ENCODE measurements at regions of chr20 and their contacts with region 1.

Region 1: DNA sequence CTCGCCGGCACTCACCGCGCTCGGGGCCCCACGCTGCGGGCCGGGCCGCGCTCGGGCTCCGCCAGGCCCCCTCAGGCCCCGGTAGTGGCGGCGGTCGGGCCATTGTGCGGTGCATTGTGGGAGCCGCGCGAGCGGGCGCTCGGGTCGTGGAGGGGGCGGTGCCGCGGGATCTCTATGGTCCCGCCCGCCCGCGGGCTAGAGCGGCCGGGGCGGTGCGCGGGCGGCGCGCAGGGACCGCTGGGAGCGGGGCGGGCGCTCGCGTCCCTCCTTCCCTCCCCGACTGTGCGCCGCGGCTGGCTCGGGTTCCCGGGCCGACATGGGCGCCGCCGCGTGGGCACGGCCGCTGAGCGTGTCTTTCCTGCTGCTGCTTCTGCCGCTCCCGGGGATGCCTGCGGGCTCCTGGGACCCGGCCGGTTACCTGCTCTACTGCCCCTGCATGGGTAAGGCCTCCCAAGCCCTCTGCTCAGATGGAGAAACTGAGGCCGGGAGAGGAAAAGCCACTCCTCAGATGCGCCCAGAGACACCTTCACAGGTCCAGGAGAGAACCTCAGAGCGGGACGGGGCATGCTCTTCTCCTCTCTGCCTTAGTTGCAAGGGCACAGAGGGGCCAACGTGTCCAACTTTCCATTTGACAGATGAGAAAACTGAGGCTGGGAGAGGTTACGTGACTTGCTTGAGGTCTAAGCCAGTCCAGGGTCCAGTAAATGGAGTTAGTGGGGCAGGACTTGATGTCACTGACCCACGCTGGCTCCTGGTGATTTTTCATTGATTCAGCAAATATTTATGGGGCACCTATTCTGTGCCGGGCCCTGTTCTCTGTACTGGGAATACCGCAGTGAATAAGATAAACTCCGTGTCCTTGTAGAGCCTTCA is at the starts of genes PLAGL2 and POFUT1:
- DNase-seq: peak; percentile 76 to 85 (median 79)
- H3K4me3 ChIP-seq: peak within 1 kb of the TSS; percentile 90 to 96 (median 93)
- H3K4me3 Mint-ChIP-seq: peak within 1 kb of the TSS; percentile 97 to 98
- H3K27ac ChIP-seq: peak within 1 kb of the TSS; percentile 79 to 88
- H3K27ac Mint-ChIP-seq: peak within 1 kb of the TSS; percentile 96 to 99 (median 97)
- H3K4me1 ChIP-seq: peaks cover 49 to 59% of the 10 kb centered on the region in 2 donors
- H3K4me1 Mint-ChIP-seq: peaks cover 67% of the 10 kb centered on the region
- H3K27me3 ChIP-seq: no peaks in the 10 kb centered on the region
- H3K27me3 Mint-ChIP-seq: peaks cover 0 to 4% (median 1%) of the 10 kb centered on the region in 3 donors
- CTCF ChIP-seq: peak; percentile 22
- polyA plus RNA-seq, gene PLAGL2: 6.2 to 31.7 (median 14.7) TPM
- polyA plus RNA-seq, gene POFUT1: 10.9 to 22.8 (median 11.8) TPM

Region 2: GRCh38 chr20:32155017-32155981 is 52.6 kb before region 1 on chr20:
- intact Hi-C with region 1: loop called in 1 of 2 experiments (anchors 1 kb)
- DNase-seq: peak; percentile 98 to 100 (median 99)
- H3K4me3 ChIP-seq: peak overlapping the region in 1 of 3 experiments; percentile 41
- H3K4me3 Mint-ChIP-seq: peak overlapping the region; percentile 70 to 87
- H3K27ac ChIP-seq: peak overlapping the region; percentile 79 to 85
- H3K27ac Mint-ChIP-seq: peak overlapping the region; percentile 94 to 99 (median 98)
- H3K4me1 ChIP-seq: peaks cover 21 to 49% of the 10 kb centered on the region in 2 donors
- H3K4me1 Mint-ChIP-seq: peaks cover 52% of the 10 kb centered on the region
- H3K27me3 ChIP-seq: no peaks in the 10 kb centered on the region
- H3K27me3 Mint-ChIP-seq: peaks cover 0 to 2% (median 0%) of the 10 kb centered on the region in 3 donors
- CTCF ChIP-seq: peak; percentile 20

Region 3: GRCh38 chr20:32249030-32249738 is 41.3 kb after region 1 on chr20:
- intact Hi-C with region 1: no loop called
- DNase-seq: peak; percentile 55 to 66 (median 65)
- H3K4me3 ChIP-seq: peak overlapping the region in 1 of 3 experiments; percentile 10
- H3K4me3 Mint-ChIP-seq: peak overlapping the region; percentile 56 to 85
- H3K27ac ChIP-seq: no peak overlapping the region
- H3K27ac Mint-ChIP-seq: peak overlapping the region in 5 of 7 donors; percentile 23 to 70 (median 38)
- H3K4me1 ChIP-seq: peaks cover 10 to 17% of the 10 kb centered on the region in 2 donors
- H3K4me1 Mint-ChIP-seq: peaks cover 16% of the 10 kb centered on the region
- H3K27me3 ChIP-seq: no peaks in the 10 kb centered on the region
- H3K27me3 Mint-ChIP-seq: peaks cover 3 to 4% (median 4%) of the 10 kb centered on the region in 3 donors
- CTCF ChIP-seq: no peak

Region 4: GRCh38 chr20:32484958-32485769 is 277.3 kb after region 1 on chr20:
- intact Hi-C with region 1: loop called in 1 of 2 experiments (anchors 10 kb)
- DNase-seq: peak; percentile 66 to 74 (median 71)
- H3K4me3 ChIP-seq: peak overlapping the region; percentile 20 to 79 (median 58)
- H3K4me3 Mint-ChIP-seq: peak overlapping the region; percentile 72 to 89
- H3K27ac ChIP-seq: peak overlapping the region; percentile 5 to 10
- H3K27ac Mint-ChIP-seq: peak overlapping the region in 5 of 7 donors; percentile 66 to 78 (median 68)
- H3K4me1 ChIP-seq: peaks cover 34 to 45% of the 10 kb centered on the region in 2 donors
- H3K4me1 Mint-ChIP-seq: peaks cover 32% of the 10 kb centered on the region
- H3K27me3 ChIP-seq: no peaks in the 10 kb centered on the region
- H3K27me3 Mint-ChIP-seq: peaks cover 3 to 9% (median 7%) of the 10 kb centered on the region in 3 donors
- CTCF ChIP-seq: peak; percentile 87